ENCODE measurements at regions of chr5 and their contacts with region 1.

Region 1: DNA sequence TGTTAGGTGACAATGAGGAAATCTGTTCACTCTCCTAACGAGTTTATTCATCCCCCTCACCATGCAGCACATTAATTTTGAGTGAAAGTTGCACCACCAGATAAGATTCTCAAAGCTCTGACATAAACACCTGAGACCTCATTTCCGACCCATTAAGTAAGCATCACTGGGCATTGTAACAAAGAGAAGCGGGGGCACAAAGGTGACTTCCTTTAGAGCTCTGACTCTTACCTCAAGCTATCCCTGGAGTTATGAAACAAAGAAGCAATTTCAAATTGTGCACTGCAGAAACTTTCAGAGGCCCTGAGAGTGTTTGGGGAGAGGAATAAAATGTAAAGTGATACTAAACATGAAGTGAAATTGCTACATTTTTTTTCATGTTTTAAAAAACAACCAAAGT is 29.5 kb downstream of the C5orf15 start:
- DNase-seq: no peak
- ATAC-seq: peak; percentile 76
- H3K4me3 ChIP-seq: no peak overlapping the region
- H3K27ac ChIP-seq: peak overlapping the region; percentile 70
- H3K4me1 ChIP-seq: peaks cover 41% of the 10 kb centered on the region
- H3K27me3 ChIP-seq: no peaks in the 10 kb centered on the region
- CTCF ChIP-seq: no peak
- EP300 ChIP-seq: no peak
- POLR2A ChIP-seq: no peak
- RAD21 ChIP-seq: 0 out of 2 replicates have a peak, but pooled peaks have one; percentile 2

Region 2: DNA sequence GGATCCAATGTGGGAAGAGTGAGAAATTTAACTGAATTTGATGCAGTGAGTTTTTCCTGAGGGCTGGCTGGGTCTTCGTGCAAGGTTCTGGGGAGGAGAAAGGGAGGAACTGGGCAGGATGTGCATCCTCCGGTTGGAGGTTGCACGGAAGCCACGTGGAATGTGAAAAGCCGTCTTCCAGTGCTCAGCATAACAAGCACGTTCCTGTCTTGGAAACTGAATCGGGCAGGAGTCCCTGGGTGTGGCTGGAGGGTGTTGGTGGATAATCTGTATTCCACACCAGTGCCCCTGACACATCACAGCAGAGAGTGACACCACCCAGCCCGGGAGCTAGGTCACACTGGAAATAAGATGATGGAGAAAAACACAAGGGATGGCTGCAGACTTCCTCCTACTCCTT is 124.8 kb before region 1 on chr5:
- CTCF ChIA-PET with region 1: no interaction called
- POLR2A ChIA-PET with region 1: no interaction called
- RAD21 ChIA-PET with region 1: no interaction called
- SMC1A ChIA-PET with region 1: no interaction called
- in situ Hi-C with region 1: no loop called
- intact Hi-C with region 1: no loop called
- DNase-seq: no peak
- ATAC-seq: no peak
- H3K4me3 ChIP-seq: no peak overlapping the region
- H3K27ac ChIP-seq: no peak overlapping the region
- H3K4me1 ChIP-seq: no peaks in the 10 kb centered on the region
- H3K27me3 ChIP-seq: no peaks in the 10 kb centered on the region
- CTCF ChIP-seq: no peak
- EP300 ChIP-seq: no peak
- POLR2A ChIP-seq: no peak
- RAD21 ChIP-seq: no peak

Region 3: GRCh38 chr5:133907075-133907474 is 31.9 kb before region 1 on chr5:
- CTCF ChIA-PET with region 1: interaction called, 5 read pairs
- POLR2A ChIA-PET with region 1: no interaction called
- RAD21 ChIA-PET with region 1: interaction called, 7 read pairs
- SMC1A ChIA-PET with region 1: interaction called, 18 read pairs
- in situ Hi-C with region 1: no loop called
- intact Hi-C with region 1: no loop called
- DNase-seq: no peak
- ATAC-seq: no peak
- H3K4me3 ChIP-seq: no peak overlapping the region
- H3K27ac ChIP-seq: no peak overlapping the region
- H3K4me1 ChIP-seq: no peaks in the 10 kb centered on the region
- H3K27me3 ChIP-seq: no peaks in the 10 kb centered on the region; a peak in 2 of 4 replicates
- CTCF ChIP-seq: no peak
- EP300 ChIP-seq: no peak
- POLR2A ChIP-seq: no peak
- RAD21 ChIP-seq: no peak

Region 4: DNA sequence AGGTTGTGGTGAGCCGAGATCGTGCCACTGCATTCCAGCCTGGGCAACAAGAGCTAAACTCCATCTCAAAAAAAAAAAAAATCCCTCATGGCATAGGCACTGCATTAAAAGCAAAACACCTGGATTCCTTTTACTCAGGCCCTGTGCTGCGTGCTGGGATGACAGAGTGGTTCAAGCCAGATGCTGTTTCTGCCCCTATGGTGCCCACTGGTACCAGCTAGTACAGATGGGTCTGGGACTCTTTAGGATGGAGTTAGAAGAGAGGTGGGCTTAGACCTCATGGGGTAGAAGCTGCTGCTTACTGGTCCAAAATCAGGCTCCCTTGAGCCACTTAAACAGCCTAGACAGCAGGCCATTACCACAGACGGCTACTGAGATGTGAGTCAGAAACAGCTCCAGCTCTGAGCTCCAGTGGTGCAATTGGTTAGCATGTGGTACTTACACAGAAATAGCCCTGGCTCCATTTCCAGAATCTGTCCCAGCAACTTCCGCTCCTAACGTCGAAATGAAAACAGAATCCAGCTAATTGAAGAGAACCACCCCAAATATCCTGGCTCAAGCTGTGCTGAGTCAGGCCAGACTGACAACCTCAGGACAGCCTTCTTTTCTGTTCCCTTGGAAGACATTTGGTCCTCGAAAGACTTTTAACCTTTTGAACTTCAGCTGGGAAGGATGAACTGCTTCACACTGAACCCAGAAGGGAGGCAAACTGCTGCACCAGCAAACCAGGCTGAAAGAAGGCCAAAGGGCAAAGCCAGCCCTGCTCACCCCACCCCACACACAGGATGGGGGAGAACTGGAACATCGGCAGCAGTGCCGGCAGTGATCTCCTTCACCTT is 14.0 kb after region 1 on chr5:
- CTCF ChIA-PET with region 1: interaction called, 9 read pairs
- POLR2A ChIA-PET with region 1: interaction called, 5 read pairs
- RAD21 ChIA-PET with region 1: interaction called, 7 read pairs
- SMC1A ChIA-PET with region 1: interaction called, 15 read pairs
- in situ Hi-C with region 1: no loop called
- intact Hi-C with region 1: no loop called
- DNase-seq: no peak
- ATAC-seq: no peak
- H3K4me3 ChIP-seq: no peak overlapping the region
- H3K27ac ChIP-seq: no peak overlapping the region
- H3K4me1 ChIP-seq: peaks cover 9% of the 10 kb centered on the region
- H3K27me3 ChIP-seq: no peaks in the 10 kb centered on the region
- CTCF ChIP-seq: no peak
- EP300 ChIP-seq: no peak
- POLR2A ChIP-seq: no peak
- RAD21 ChIP-seq: no peak

Measured in GM12878 (cell line).